GM13976 (cell line): ENCODE measurements at regions of chr6 and their contacts with region 1.

Region 1: GRCh38 chr6:10478187-10479040 is 42.7 kb upstream of the GCNT2 start:
- DNase-seq: peak; percentile 66
- CTCF ChIP-seq: peak; percentile 45

Region 2: GRCh38 chr6:10800829-10801535 is 322.6 kb after region 1 on chr6:
- in situ Hi-C with region 1: loop called (anchors 5 kb)
- DNase-seq: peak; percentile 82
- CTCF ChIP-seq: peak; percentile 91

Region 3: GRCh38 chr6:11050731-11051130 is 572.3 kb after region 1 on chr6:
- in situ Hi-C with region 1: loop called (anchors 25 kb)
- DNase-seq: no peak
- CTCF ChIP-seq: no peak